ENCODE measurements at regions of chr20 and their contacts with region 1.

Region 1: DNA sequence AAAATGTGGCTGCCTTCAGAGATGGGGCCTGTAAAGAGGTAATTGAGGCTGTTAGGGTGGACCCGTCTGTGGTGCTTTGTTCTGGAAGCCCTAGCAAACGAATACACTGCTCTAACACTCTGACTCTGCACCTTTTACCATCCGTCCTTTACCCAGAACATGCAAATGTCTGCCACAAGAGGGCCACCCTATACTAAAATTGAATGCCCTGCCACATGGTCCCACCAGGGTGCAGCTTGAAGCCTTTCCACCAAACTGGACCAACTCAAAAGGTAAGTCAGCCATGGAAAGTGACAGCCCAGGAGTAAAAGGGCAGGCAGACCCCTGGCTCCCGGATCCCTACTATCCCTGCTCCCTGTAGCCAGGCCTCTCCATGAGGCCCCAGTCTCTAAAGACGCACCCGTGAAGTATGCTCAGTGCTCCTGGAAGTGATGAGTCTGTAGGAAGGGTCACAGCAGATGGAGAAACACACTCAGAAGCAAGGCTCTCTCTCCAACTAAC is 5.8 kb upstream of the BFSP1 start:
- DNase-seq: peak; percentile 76
- ATAC-seq: peak; percentile 98
- H3K4me3 ChIP-seq: no peak overlapping the region
- H3K27ac ChIP-seq: no peak overlapping the region
- H3K4me1 ChIP-seq: peaks cover 2% of the 10 kb centered on the region
- H3K27me3 ChIP-seq: peaks cover 4% of the 10 kb centered on the region
- CTCF ChIP-seq: peak; percentile 98
- POLR2A ChIP-seq: peak; percentile 46; the same call in 1 of the 2 replicates
- RAD21 ChIP-seq: peak; percentile 94

Region 2: DNA sequence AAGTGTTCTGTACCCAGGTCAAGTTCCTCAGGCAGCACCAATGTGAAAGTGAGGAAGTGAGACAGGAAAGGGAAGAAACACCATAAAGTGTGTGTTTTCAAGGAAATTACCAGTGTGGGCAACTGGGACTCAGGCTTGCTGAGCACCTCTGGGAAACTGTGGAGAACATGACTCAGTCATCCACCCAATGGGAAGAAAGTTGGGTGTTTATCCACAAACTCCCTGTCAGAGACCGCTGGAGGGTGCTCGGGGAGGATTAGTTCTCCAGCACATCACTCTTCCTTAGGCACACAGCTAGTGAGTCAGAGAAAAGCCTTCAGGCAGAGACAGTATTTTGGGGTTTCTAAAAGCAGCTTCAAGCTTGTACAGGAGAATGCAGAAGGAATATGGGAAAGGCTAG is 216.5 kb before region 1 on chr20:
- CTCF ChIA-PET with region 1: no interaction called
- POLR2A ChIA-PET with region 1: no interaction called
- dilution Hi-C with region 1: no loop called
- in situ Hi-C with region 1: no loop called
- intact Hi-C with region 1: no loop called
- DNase-seq: no peak
- ATAC-seq: no peak
- H3K4me3 ChIP-seq: no peak overlapping the region
- H3K27ac ChIP-seq: no peak overlapping the region
- H3K4me1 ChIP-seq: no peaks in the 10 kb centered on the region
- H3K27me3 ChIP-seq: peaks cover 6% of the 10 kb centered on the region
- CTCF ChIP-seq: no peak
- POLR2A ChIP-seq: no peak
- RAD21 ChIP-seq: no peak

Region 3: GRCh38 chr20:17594443-17594842 is 57.4 kb after region 1 on chr20:
- CTCF ChIA-PET with region 1: interaction called, 3 read pairs
- POLR2A ChIA-PET with region 1: no interaction called
- dilution Hi-C with region 1: no loop called
- in situ Hi-C with region 1: no loop called
- intact Hi-C with region 1: loop called (anchors 1 kb)
- DNase-seq: peak; percentile 87
- ATAC-seq: peak; percentile 91
- H3K4me3 ChIP-seq: no peak overlapping the region
- H3K27ac ChIP-seq: no peak overlapping the region
- H3K4me1 ChIP-seq: peaks cover 17% of the 10 kb centered on the region
- H3K27me3 ChIP-seq: no peaks in the 10 kb centered on the region
- CTCF ChIP-seq: no peak
- POLR2A ChIP-seq: no peak
- RAD21 ChIP-seq: peak; percentile 12; the same call in 1 of the 2 replicates

Region 4: GRCh38 chr20:17617551-17618223 is 80.7 kb after region 1 on chr20:
- CTCF ChIA-PET with region 1: interaction called, 4 read pairs
- POLR2A ChIA-PET with region 1: no interaction called
- dilution Hi-C with region 1: no loop called
- in situ Hi-C with region 1: loop called (anchors 5 kb)
- intact Hi-C with region 1: loop called (anchors 1 kb)
- DNase-seq: no peak
- ATAC-seq: peak; percentile 38
- H3K4me3 ChIP-seq: no peak overlapping the region
- H3K27ac ChIP-seq: no peak overlapping the region
- H3K4me1 ChIP-seq: no peaks in the 10 kb centered on the region; the same call in 1 of the 2 replicates
- H3K27me3 ChIP-seq: no peaks in the 10 kb centered on the region
- CTCF ChIP-seq: peak; percentile 53
- POLR2A ChIP-seq: no peak
- RAD21 ChIP-seq: peak; percentile 70

Region 5: DNA sequence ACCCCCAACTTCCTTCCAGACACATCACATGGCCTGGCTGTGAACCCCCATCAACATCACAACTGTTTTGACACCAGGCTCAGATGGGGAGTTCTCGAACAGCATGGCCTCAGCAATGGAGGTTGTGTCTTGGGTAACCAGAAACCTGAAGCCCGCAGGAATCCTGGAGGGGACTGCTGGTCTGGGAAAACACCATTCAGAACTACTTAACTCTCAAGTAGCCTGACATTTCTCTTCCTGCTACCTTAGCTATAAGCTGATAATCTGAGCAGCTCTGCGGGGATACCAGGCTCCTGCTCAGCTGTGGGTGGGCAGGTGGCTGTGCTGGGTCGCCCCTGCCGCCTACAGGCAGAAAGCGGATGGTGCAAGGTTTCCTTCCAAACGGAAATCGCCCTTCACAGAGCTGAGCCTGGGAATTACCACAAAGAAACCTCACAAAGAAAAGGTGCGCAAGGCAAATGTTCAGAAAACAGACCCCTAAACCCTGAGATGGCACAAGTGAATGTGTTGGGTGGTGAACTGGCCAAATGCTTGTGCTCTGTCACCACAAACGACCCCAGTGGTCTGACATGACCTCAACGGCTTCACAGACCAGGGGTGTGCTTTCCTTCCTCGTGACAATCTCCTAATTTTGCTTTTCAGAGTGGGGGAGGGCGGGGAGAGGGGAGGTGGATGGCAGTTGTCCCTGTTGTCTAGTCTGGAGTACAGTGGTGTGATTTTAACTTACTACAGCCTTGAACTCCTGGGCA is 402.1 kb after region 1 on chr20:
- CTCF ChIA-PET with region 1: no interaction called
- POLR2A ChIA-PET with region 1: no interaction called
- dilution Hi-C with region 1: no loop called
- in situ Hi-C with region 1: no loop called
- intact Hi-C with region 1: loop called (anchors 10 kb)
- DNase-seq: peak; percentile 67
- ATAC-seq: peak; percentile 77
- H3K4me3 ChIP-seq: no peak overlapping the region
- H3K27ac ChIP-seq: no peak overlapping the region; the same call in 1 of the 2 replicates
- H3K4me1 ChIP-seq: peaks cover 23% of the 10 kb centered on the region
- H3K27me3 ChIP-seq: no peaks in the 10 kb centered on the region
- CTCF ChIP-seq: peak; percentile 92
- POLR2A ChIP-seq: no peak; the same call in 1 of the 2 replicates
- RAD21 ChIP-seq: peak; percentile 94